ENCODE measurements at regions of chr5 and their contacts with region 1.

Region 1: DNA sequence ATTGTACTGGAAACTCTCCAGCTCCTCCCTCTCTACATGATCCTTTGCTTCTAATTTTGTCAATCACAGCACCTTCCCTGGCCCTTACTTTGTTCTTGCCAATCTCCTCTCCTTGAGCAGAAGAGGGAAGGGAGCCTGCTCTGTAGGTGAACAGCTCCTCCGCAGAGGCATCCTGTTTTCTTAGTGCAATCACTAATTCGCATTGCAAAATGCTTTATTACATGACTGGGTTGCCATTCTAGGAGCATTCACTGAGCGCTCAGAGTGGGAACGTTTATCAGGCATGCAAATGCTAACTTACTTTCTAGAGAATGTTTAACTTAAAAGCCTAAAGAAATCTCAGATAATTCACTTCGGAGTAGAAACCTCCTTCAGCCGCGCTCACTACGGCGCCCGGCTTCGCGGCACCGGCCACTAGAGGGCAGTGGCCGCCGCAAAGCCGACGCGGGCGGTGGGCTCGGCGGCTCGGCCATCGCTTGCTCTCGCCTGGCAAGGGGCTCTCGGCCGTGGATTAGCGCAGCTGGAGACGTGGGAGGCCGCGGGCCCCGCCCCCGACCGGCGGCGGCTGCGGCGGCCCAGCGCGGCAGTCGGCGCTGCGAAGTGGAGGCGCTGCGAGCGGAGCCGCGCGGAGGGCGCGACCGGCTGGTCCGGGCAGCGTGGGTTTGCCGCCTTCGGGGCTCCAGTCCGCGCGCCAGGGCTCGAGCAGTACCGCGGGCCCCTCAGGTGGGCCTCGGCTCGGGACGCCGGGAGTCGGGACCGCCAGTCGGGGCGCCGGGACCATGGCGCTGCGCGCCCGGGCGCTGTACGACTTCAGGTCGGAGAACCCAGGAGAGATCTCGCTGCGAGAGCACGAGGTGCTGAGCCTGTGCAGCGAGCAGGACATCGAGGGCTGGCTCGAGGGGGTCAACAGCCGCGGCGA is at the start of gene SNX18:
- DNase-seq: peak; percentile 92 to 96 (median 94)
- ATAC-seq: peak; percentile 96
- H3K4me3 ChIP-seq: peak within 1 kb of the TSS; percentile 62 to 91
- H3K27ac ChIP-seq: peak within 1 kb of the TSS; percentile 77 to 96 (median 89)
- H3K4me1 ChIP-seq: peaks cover 39% of the 10 kb centered on the region
- H3K27me3 ChIP-seq: no peaks in the 10 kb centered on the region
- CTCF ChIP-seq: peak; percentile 95 to 100 (median 99)
- POLR2A ChIP-seq: peak; percentile 45 to 64 (median 60)
- total RNA-seq, gene SNX18: 22.4 to 24.4 TPM

Region 2: DNA sequence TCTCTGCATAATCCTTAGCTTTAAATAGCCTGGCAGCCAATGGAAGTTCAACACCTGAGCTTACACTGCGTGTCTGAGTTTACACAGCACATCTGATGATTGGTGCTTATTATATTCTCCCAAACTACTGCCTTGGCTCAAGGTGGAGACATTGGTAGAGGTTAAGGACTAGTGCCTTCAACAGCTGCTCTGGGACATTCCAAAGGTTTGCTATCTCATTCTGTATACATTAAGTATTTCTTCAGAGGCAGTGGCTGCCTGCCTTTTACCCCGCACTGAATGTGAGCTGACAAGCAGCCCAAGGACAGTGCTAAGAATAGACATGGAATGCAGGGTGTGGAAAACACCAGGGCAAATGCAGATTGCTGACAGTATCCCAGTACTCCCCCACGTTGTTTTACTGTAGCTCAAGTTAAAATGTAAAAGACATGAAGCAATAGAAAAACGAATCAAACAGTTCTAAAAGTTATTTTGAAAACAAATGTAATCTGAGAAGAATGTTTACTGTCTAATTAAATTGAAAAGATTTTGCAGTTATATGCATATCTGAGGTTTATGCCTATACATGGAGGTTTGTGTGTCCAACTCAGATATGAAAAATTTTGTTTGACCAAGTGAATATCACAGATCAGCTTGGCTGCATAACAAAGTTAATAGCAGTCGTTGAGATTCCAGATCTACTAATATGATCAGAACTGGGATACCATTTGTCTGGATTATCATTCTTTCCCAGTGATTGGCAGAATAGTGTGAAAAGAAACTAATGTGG is 60.2 kb before region 1 on chr5:
- intact Hi-C with region 1: no loop called
- DNase-seq: peak; percentile 26 to 52 (median 46)
- ATAC-seq: peak; percentile 95
- H3K4me3 ChIP-seq: no peak overlapping the region
- H3K27ac ChIP-seq: peak overlapping the region in 2 of 4 donors; percentile 26 to 53
- H3K4me1 ChIP-seq: peaks cover 14% of the 10 kb centered on the region
- H3K27me3 ChIP-seq: no peaks in the 10 kb centered on the region
- CTCF ChIP-seq: no peak
- POLR2A ChIP-seq: no peak

Region 3: DNA sequence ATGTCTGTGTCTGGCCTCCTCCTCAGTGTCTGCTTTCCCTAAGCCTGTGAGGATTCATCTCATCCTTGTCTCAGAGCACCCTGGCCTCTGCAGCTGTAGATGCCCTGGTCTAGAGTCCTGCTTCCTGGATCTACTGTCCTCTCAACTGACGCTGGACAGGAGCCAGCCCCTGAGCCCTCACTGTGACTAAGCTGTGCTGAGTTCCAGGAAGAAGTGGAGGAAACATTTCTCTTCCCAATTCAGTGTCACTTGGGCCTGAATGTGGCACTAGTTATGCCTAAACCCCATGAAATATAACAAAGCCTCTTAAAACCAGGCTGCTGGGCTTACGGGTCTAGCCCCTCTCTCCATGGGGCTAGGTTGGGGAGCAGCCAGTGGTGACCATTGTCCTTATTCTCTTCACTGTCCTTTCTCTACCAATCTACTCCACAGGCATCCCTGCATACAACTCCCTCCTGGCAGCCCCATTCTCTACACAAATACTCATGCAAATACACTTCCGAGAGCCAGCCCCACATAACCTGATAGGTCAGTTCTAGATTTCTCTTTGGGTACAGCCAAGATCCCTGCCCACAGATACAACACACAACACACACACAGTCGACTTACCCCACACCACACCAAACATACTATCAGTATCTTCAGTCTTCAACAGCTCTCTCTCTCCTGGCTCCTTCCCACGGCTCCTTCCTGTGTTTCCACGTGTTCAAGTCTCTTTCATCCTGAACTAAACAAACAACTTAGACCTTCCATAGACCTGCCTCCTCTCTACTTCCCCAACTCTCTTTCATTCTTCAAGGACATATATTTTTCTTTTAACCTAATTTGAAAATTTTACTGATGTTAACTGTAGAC is 220.9 kb after region 1 on chr5:
- intact Hi-C with region 1: no loop called
- DNase-seq: peak; percentile 32 to 73 (median 57)
- ATAC-seq: peak; percentile 45
- H3K4me3 ChIP-seq: no peak overlapping the region
- H3K27ac ChIP-seq: no peak overlapping the region
- H3K4me1 ChIP-seq: peaks cover 9% of the 10 kb centered on the region
- H3K27me3 ChIP-seq: no peaks in the 10 kb centered on the region
- CTCF ChIP-seq: no peak
- POLR2A ChIP-seq: no peak

Region 4: DNA sequence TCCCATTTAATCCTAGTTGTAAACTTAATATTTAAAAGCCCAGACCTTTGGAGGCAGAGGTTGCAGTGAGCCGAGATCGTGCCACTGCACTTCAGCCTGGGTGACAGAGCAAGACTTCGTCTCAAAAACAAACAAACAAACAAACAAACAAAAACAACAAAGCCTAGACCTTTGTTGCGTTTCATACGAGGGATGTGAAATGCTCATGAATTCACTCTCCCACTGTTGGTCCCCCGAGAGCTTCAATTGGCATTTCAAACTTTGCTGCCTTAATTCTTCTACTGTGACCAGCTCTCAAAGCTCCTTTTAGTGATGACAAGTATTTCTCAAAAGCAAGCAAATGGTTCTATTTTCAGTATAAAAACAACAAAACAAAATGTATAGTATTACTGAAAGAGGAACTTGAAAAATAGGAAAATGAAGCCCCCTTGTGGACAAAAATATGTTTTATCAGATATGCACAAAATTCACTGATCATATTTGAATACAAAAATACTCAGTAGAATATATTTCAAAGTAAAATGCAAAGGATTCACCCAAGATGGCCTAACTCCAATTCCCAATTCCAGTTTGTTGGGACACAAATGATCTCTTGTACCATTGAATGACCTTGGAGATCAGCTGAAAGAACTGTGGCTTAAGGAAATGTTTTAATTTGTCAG is 327.6 kb after region 1 on chr5:
- intact Hi-C with region 1: loop called (anchors 5 kb)
- DNase-seq: no peak
- ATAC-seq: no peak
- H3K4me3 ChIP-seq: no peak overlapping the region
- H3K27ac ChIP-seq: no peak overlapping the region
- H3K4me1 ChIP-seq: peaks cover 4% of the 10 kb centered on the region
- H3K27me3 ChIP-seq: no peaks in the 10 kb centered on the region
- CTCF ChIP-seq: peak; percentile 15 to 73 (median 62)
- POLR2A ChIP-seq: no peak

Region 5: DNA sequence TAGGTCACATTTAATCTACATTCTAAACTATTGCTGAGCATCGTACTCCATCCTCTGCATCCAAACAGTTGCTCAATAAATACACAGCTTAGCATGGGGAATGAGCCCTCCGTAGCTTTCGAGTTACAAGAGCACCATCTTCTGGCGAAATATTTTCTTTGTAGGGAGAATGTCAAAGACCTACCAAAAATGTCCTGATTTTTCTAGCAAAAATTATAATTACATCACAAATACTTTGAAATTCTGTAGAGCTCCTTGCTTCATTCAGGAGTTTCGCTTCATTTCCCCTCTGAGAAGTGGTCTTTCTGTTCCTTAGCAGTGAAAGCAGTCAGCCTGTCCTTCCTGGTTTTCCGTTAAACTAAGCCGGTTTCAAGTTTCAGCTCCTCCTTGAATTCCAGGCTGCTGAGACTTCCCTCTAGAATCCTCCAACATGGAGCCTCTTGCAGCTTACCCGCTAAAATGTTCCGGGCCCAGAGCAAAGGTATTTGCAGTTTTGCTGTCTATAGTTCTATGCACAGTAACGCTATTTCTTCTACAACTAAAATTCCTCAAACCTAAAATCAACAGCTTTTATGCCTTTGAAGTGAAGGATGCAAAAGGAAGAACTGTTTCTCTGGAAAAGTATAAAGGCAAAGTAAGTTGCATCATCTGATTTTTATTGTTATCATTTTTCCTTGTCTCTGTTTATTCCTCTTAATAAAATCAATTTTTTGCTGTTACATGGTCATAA is 642.5 kb after region 1 on chr5 and contains the start of gene GPX8:
- intact Hi-C with region 1: loop called (anchors 10 kb)
- DNase-seq: peak in 3 of 4 donors; percentile 29 to 48 (median 29)
- ATAC-seq: peak; percentile 86
- H3K4me3 ChIP-seq: peak within 1 kb of the TSS in 1 of 2 donors; percentile 3
- H3K27ac ChIP-seq: peak within 1 kb of the TSS in 2 of 4 donors; percentile 51 to 63
- H3K4me1 ChIP-seq: peaks cover 18% of the 10 kb centered on the region
- H3K27me3 ChIP-seq: no peaks in the 10 kb centered on the region
- CTCF ChIP-seq: peak; percentile 36 to 75 (median 60)
- POLR2A ChIP-seq: no peak
- total RNA-seq, gene GPX8: 0.99 to 6.7 TPM

Measured in body of pancreas (tissue), 4 donors.